MCF 10A (cell line): ENCODE measurements at regions of chr11 and their contacts with region 1.

Region 1: DNA sequence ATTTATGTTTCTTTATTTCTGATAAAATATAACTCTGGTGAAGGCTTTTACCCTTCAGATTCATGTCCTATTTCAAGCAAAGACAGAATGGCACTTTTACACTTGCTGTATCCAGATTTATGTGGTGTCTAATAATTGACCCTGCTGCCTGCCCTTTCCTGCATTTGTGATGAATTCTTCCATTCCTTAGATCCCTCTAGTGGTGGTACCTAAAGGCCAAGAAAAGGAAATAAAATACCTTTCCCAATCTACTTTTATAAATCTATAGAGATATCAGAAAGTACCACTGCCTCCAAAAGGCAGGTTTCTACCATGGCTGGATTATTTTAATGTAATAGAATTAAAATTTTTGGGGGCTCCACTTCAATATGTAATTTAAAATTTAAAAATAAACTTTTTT is 34.2 kb downstream of the CCDC81 start:
- DNase-seq: peak; percentile 2
- H3K4me3 Mint-ChIP-seq: no peak overlapping the region
- H3K27ac Mint-ChIP-seq: no peak overlapping the region
- H3K4me1 Mint-ChIP-seq: no peaks in the 10 kb centered on the region
- H3K27me3 Mint-ChIP-seq: no peaks in the 10 kb centered on the region
- CTCF ChIP-seq: peak; percentile 23

Region 2: DNA sequence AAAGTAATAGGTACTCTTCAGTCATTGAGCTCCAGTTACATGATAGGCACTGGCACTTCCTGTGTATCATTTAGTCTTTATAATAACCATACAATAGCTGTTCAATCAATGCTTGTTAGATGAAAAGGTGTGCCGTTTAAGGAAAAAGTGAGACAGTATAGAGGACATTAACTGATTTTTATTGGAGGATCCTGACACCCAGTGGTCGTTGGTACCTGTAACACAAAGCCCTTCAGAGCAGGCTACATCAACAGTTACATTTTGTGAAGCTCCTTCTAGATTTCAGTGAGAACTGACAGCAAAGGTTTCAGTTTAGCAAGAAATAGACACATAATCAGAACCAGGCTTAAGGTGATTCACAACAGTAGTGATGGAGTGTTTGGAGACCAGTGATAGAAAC is 10.1 kb after region 1 on chr11:
- CTCF ChIA-PET with region 1: interaction called, 5 read pairs
- POLR2A ChIA-PET with region 1: interaction called, 3 read pairs
- intact Hi-C with region 1: loop called (anchors 1 kb)
- DNase-seq: peak; percentile 30
- H3K4me3 Mint-ChIP-seq: no peak overlapping the region
- H3K27ac Mint-ChIP-seq: no peak overlapping the region
- H3K4me1 Mint-ChIP-seq: no peaks in the 10 kb centered on the region
- H3K27me3 Mint-ChIP-seq: no peaks in the 10 kb centered on the region
- CTCF ChIP-seq: peak; percentile 10

Region 3: GRCh38 chr11:86502137-86502642 is 93.3 kb after region 1 on chr11:
- CTCF ChIA-PET with region 1: no interaction called
- POLR2A ChIA-PET with region 1: no interaction called
- intact Hi-C with region 1: no loop called
- DNase-seq: no peak
- H3K4me3 Mint-ChIP-seq: no peak overlapping the region
- H3K27ac Mint-ChIP-seq: no peak overlapping the region
- H3K4me1 Mint-ChIP-seq: peaks cover 5% of the 10 kb centered on the region
- H3K27me3 Mint-ChIP-seq: no peaks in the 10 kb centered on the region
- CTCF ChIP-seq: no peak

Region 4: GRCh38 chr11:86596861-86597586 is 188.2 kb after region 1 on chr11:
- CTCF ChIA-PET with region 1: no interaction called
- POLR2A ChIA-PET with region 1: no interaction called
- intact Hi-C with region 1: no loop called
- DNase-seq: no peak
- H3K4me3 Mint-ChIP-seq: no peak overlapping the region
- H3K27ac Mint-ChIP-seq: no peak overlapping the region
- H3K4me1 Mint-ChIP-seq: peaks cover 17% of the 10 kb centered on the region
- H3K27me3 Mint-ChIP-seq: no peaks in the 10 kb centered on the region
- CTCF ChIP-seq: no peak